MCF 10A (cell line): ENCODE measurements at regions of chr7 and their contacts with region 1.

Region 1: GRCh38 chr7:77536413-77537135 is 521 bp upstream of the PTPN12 start:
- DNase-seq: peak; percentile 97
- H3K4me3 Mint-ChIP-seq: peak overlapping the region; percentile 78
- H3K27ac Mint-ChIP-seq: peak overlapping the region; percentile 86
- H3K4me1 Mint-ChIP-seq: peaks cover 12% of the 10 kb centered on the region
- H3K27me3 Mint-ChIP-seq: no peaks in the 10 kb centered on the region
- CTCF ChIP-seq: no peak

Region 2: GRCh38 chr7:77360104-77360503 is 176.5 kb before region 1 on chr7:
- CTCF ChIA-PET with region 1: no interaction called
- POLR2A ChIA-PET with region 1: no interaction called
- intact Hi-C with region 1: no loop called
- DNase-seq: no peak
- H3K4me3 Mint-ChIP-seq: no peak overlapping the region
- H3K27ac Mint-ChIP-seq: no peak overlapping the region
- H3K4me1 Mint-ChIP-seq: no peaks in the 10 kb centered on the region
- H3K27me3 Mint-ChIP-seq: no peaks in the 10 kb centered on the region
- CTCF ChIP-seq: no peak

Region 3: GRCh38 chr7:77409739-77410547 is 126.6 kb before region 1 on chr7:
- CTCF ChIA-PET with region 1: no interaction called
- POLR2A ChIA-PET with region 1: interaction called, 22 read pairs
- intact Hi-C with region 1: loop called (anchors 5 kb)
- DNase-seq: peak; percentile 94
- H3K4me3 Mint-ChIP-seq: peak overlapping the region; percentile 12
- H3K27ac Mint-ChIP-seq: peak overlapping the region; percentile 93
- H3K4me1 Mint-ChIP-seq: peaks cover 11% of the 10 kb centered on the region
- H3K27me3 Mint-ChIP-seq: no peaks in the 10 kb centered on the region
- CTCF ChIP-seq: no peak

Region 4: GRCh38 chr7:77439572-77439971 is 97.0 kb before region 1 on chr7:
- CTCF ChIA-PET with region 1: interaction called, 4 read pairs
- POLR2A ChIA-PET with region 1: interaction called, 4 read pairs
- intact Hi-C with region 1: loop called (anchors 1 kb)
- DNase-seq: peak; percentile 76
- H3K4me3 Mint-ChIP-seq: no peak overlapping the region
- H3K27ac Mint-ChIP-seq: no peak overlapping the region
- H3K4me1 Mint-ChIP-seq: peaks cover 14% of the 10 kb centered on the region
- H3K27me3 Mint-ChIP-seq: no peaks in the 10 kb centered on the region
- CTCF ChIP-seq: peak; percentile 41

Region 5: DNA sequence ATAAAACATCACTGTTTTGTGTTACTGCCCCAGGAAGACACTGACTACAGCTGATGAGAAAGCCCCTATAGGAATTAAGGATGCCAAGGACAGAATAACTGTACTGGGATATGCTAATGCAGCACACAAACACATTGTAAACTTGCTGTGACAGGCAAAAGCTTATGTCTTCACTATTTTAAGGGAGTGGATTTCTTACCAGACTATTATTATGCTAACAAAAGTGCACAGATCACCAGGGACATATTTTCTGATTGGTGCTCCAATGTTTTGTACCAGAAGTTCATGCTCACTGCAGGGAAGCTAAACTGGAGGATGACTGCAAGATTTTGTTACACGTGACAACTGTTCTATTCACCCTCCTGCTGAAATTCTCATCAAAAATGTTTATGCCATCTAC is 47.6 kb before region 1 on chr7:
- CTCF ChIA-PET with region 1: no interaction called
- POLR2A ChIA-PET with region 1: no interaction called
- intact Hi-C with region 1: no loop called
- DNase-seq: no peak
- H3K4me3 Mint-ChIP-seq: no peak overlapping the region
- H3K27ac Mint-ChIP-seq: no peak overlapping the region
- H3K4me1 Mint-ChIP-seq: no peaks in the 10 kb centered on the region
- H3K27me3 Mint-ChIP-seq: peaks cover 11% of the 10 kb centered on the region
- CTCF ChIP-seq: no peak

Region 6: DNA sequence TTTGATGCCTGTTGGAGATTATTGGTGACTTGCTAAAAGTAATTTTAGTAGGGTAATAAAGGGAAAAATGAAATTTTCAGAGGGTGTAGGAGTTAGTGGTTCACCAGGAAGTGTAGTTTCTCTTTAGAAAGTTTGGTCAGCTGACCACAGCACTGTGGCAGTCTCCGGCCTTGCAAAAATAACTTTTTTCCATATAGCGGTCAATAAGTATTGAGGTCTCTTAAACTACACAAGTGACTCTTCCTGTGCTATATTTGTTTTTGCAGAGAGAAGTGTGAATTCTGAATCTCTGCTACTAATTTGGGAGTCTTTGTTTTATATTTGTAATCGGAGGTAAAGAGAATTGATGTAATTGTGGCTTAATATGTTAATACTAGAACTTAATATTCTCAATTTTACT is 24.8 kb after region 1 on chr7:
- CTCF ChIA-PET with region 1: interaction called, 4 read pairs
- POLR2A ChIA-PET with region 1: interaction called, 62 read pairs
- intact Hi-C with region 1: no loop called
- DNase-seq: no peak
- H3K4me3 Mint-ChIP-seq: no peak overlapping the region
- H3K27ac Mint-ChIP-seq: peak overlapping the region; percentile 51
- H3K4me1 Mint-ChIP-seq: peaks cover 40% of the 10 kb centered on the region
- H3K27me3 Mint-ChIP-seq: no peaks in the 10 kb centered on the region
- CTCF ChIP-seq: no peak

Region 7: GRCh38 chr7:77580762-77581350 is 44.3 kb after region 1 on chr7:
- CTCF ChIA-PET with region 1: interaction called, 6 read pairs
- POLR2A ChIA-PET with region 1: interaction called, 3 read pairs
- intact Hi-C with region 1: loop called (anchors 5 kb)
- DNase-seq: peak; percentile 53
- H3K4me3 Mint-ChIP-seq: no peak overlapping the region
- H3K27ac Mint-ChIP-seq: peak overlapping the region; percentile 49
- H3K4me1 Mint-ChIP-seq: no peaks in the 10 kb centered on the region
- H3K27me3 Mint-ChIP-seq: no peaks in the 10 kb centered on the region
- CTCF ChIP-seq: no peak